ENCODE measurements at regions of chr17 and their contacts with region 1.

Region 1: DNA sequence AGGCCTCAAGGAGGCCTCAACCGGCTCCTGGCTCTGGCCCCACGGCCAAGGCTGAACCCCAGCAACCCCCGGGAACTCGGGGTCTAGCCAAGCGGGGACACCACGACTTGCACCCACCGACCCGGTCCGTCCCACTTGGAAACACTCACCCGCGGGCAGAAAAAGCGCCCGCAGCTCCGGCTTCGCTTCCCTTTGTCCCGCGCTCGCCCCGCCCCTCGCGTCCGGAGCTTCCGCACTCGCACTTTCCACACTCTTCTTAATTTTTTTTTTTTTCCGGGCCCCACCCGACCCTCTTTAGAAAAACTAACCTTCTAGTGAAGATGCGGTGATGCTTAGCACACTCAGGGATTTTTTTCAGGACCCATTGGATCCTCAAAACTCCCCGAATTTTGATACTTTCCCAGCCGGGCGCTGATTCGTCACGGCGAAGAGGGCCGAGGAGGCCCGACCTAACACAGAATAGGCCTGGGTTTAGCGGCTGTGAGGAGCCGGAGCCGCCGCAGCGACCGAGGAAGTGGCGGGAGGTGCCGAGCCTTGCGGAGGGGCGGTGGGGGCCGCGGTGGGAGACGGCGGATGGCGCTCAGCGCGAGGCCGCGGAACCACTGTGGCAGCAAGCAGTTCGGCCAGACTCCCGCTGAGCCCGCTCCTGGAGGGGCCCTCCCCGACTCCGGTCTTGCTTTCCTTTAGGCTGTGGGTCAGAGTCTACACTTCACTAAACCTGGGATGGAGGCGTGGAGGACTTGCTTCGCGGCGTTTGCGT is at the start of gene SMARCE1:
- DNase-seq: peak; percentile 51 to 88 (median 73)
- ATAC-seq: peak; percentile 66
- H3K4me3 ChIP-seq: peak within 1 kb of the TSS; percentile 85 to 96
- H3K4me3 Mint-ChIP-seq: peak within 1 kb of the TSS; percentile 95
- H3K27ac ChIP-seq: peak within 1 kb of the TSS; percentile 95 to 99
- H3K27ac Mint-ChIP-seq: peak within 1 kb of the TSS; percentile 99
- H3K4me1 ChIP-seq: peaks cover 36% of the 10 kb centered on the region
- H3K4me1 Mint-ChIP-seq: peaks cover 40% of the 10 kb centered on the region
- H3K27me3 ChIP-seq: no peaks in the 10 kb centered on the region
- H3K27me3 Mint-ChIP-seq: no peaks in the 10 kb centered on the region
- CTCF ChIP-seq: no peak
- total RNA-seq, gene SMARCE1: 64.8 to 74.9 TPM

Region 2: DNA sequence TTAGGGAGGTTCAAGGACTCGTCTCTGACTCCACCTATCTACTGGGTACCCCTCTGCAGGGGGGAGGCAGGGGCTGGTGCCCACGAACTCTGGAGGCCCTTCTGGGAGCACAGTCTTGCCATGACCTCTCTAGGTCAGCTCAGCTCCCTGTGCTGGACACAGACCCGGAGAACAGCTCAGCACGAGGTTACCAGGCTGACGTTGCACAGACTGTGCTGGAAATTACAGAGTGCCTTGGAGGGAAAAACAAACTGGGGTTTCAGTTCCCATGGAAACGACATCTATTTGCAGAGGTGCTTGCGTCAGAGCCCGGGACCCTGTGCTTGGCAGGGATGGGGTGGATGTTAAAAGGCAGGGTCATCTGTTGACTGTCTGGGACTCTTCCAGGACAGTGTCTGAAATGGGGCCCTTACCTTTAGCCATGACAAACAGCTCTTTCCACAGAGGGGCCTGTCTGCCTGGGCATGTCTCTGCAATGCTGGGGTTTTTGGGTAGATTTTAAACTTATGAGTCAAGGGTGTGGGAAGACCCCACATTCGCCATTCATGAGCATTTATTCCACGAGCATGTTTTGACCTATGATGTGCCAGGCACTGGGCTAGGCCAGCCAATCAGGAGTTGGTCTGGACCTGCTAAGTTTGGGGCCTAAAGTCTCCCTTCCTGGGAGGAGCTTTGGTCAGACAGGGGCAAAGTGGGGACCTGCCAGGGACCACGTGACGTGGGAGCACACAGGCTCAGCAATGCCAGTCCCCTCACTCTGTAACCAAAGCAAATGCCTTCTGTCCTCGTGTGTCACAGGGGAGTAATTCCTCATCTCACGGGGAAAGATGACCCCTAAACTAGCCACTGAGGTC is 105.0 kb before region 1 on chr17:
- CTCF ChIA-PET with region 1: no interaction called
- POLR2A ChIA-PET with region 1: interaction called, 10 read pairs
- intact Hi-C with region 1: no loop called
- DNase-seq: peak in 6 of 9 experiments; percentile 21 to 75 (median 58)
- ATAC-seq: peak; percentile 3
- H3K4me3 ChIP-seq: no peak overlapping the region
- H3K4me3 Mint-ChIP-seq: peak overlapping the region; percentile 72
- H3K27ac ChIP-seq: peak overlapping the region in 1 of 2 experiments; percentile 66
- H3K27ac Mint-ChIP-seq: peak overlapping the region; percentile 96
- H3K4me1 ChIP-seq: peaks cover 86% of the 10 kb centered on the region
- H3K4me1 Mint-ChIP-seq: peaks cover 88% of the 10 kb centered on the region
- H3K27me3 ChIP-seq: no peaks in the 10 kb centered on the region
- H3K27me3 Mint-ChIP-seq: no peaks in the 10 kb centered on the region
- CTCF ChIP-seq: no peak

Region 3: GRCh38 chr17:40582328-40582901 is 65.4 kb before region 1 on chr17:
- CTCF ChIA-PET with region 1: no interaction called
- POLR2A ChIA-PET with region 1: no interaction called
- intact Hi-C with region 1: no loop called
- DNase-seq: peak; percentile 48 to 90 (median 77)
- ATAC-seq: peak; percentile 85
- H3K4me3 ChIP-seq: peak overlapping the region; percentile 15 to 17
- H3K4me3 Mint-ChIP-seq: peak overlapping the region; percentile 79
- H3K27ac ChIP-seq: peak overlapping the region; percentile 60 to 74
- H3K27ac Mint-ChIP-seq: peak overlapping the region; percentile 94
- H3K4me1 ChIP-seq: peaks cover 86% of the 10 kb centered on the region
- H3K4me1 Mint-ChIP-seq: peaks cover 95% of the 10 kb centered on the region
- H3K27me3 ChIP-seq: no peaks in the 10 kb centered on the region
- H3K27me3 Mint-ChIP-seq: no peaks in the 10 kb centered on the region
- CTCF ChIP-seq: no peak

Region 4: DNA sequence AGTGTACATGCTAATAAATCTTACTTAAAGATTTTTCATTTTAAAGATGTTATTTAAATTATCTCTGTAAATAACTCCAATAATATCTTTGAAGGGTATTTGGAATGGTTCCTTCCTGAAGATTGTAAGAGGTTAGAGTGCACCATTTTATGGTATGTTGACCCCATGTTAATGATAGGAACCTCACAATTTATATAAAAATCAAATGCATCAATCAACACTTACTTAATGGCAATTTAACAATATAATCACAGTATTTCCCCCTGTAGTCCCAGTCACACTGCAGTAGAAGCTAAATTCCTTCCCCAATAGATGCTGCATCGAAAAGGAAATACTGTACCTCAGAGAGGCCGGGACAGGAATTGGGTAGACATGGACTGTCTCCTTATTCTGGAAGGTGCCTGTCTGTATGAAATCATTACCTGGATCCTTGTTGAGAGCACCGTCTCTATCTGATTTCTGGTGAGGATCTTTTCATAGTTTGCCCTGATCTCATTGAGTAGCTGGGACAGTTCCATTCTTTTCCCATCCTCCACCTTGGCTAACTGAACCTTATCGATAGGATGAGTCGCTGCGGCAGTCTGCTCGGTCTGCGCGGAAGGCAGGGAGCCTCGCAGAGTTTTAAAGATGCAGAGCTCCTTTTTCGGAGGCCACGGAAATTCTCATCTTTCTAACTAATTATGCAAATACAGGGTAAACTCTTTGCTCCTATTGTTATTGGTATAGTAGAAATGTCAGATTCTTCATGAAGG is 17.0 kb after region 1 on chr17 and contains the start of gene KRT222:
- CTCF ChIA-PET with region 1: no interaction called
- POLR2A ChIA-PET with region 1: interaction called, 10 read pairs
- intact Hi-C with region 1: no loop called
- DNase-seq: no peak
- ATAC-seq: no peak
- H3K4me3 ChIP-seq: no peak within 1 kb of the TSS
- H3K4me3 Mint-ChIP-seq: peak within 1 kb of the TSS; percentile 26
- H3K27ac ChIP-seq: no peak within 1 kb of the TSS
- H3K27ac Mint-ChIP-seq: no peak within 1 kb of the TSS
- H3K4me1 ChIP-seq: peaks cover 5% of the 10 kb centered on the region
- H3K4me1 Mint-ChIP-seq: peaks cover 11% of the 10 kb centered on the region
- H3K27me3 ChIP-seq: no peaks in the 10 kb centered on the region
- H3K27me3 Mint-ChIP-seq: peaks cover 27% of the 10 kb centered on the region
- CTCF ChIP-seq: no peak
- total RNA-seq, gene KRT222: not detected

Region 5: GRCh38 chr17:40678902-40679522 is 31.2 kb after region 1 on chr17:
- CTCF ChIA-PET with region 1: no interaction called
- POLR2A ChIA-PET with region 1: no interaction called
- intact Hi-C with region 1: no loop called
- DNase-seq: peak in 1 of 9 experiments; percentile 10
- ATAC-seq: peak; percentile 38
- H3K4me3 ChIP-seq: no peak overlapping the region
- H3K4me3 Mint-ChIP-seq: no peak overlapping the region
- H3K27ac ChIP-seq: no peak overlapping the region
- H3K27ac Mint-ChIP-seq: no peak overlapping the region
- H3K4me1 ChIP-seq: no peaks in the 10 kb centered on the region
- H3K4me1 Mint-ChIP-seq: no peaks in the 10 kb centered on the region
- H3K27me3 ChIP-seq: peaks cover 0 to 4% of the 10 kb centered on the region in 2 experiments
- H3K27me3 Mint-ChIP-seq: peaks cover 47% of the 10 kb centered on the region
- CTCF ChIP-seq: no peak

Region 6: GRCh38 chr17:40707720-40708119 is 59.9 kb after region 1 on chr17:
- CTCF ChIA-PET with region 1: no interaction called
- POLR2A ChIA-PET with region 1: no interaction called
- intact Hi-C with region 1: no loop called
- DNase-seq: no peak
- ATAC-seq: no peak
- H3K4me3 ChIP-seq: no peak overlapping the region
- H3K4me3 Mint-ChIP-seq: no peak overlapping the region
- H3K27ac ChIP-seq: no peak overlapping the region
- H3K27ac Mint-ChIP-seq: no peak overlapping the region
- H3K4me1 ChIP-seq: no peaks in the 10 kb centered on the region
- H3K4me1 Mint-ChIP-seq: no peaks in the 10 kb centered on the region
- H3K27me3 ChIP-seq: no peaks in the 10 kb centered on the region
- H3K27me3 Mint-ChIP-seq: peaks cover 27% of the 10 kb centered on the region
- CTCF ChIP-seq: no peak

Region 7: DNA sequence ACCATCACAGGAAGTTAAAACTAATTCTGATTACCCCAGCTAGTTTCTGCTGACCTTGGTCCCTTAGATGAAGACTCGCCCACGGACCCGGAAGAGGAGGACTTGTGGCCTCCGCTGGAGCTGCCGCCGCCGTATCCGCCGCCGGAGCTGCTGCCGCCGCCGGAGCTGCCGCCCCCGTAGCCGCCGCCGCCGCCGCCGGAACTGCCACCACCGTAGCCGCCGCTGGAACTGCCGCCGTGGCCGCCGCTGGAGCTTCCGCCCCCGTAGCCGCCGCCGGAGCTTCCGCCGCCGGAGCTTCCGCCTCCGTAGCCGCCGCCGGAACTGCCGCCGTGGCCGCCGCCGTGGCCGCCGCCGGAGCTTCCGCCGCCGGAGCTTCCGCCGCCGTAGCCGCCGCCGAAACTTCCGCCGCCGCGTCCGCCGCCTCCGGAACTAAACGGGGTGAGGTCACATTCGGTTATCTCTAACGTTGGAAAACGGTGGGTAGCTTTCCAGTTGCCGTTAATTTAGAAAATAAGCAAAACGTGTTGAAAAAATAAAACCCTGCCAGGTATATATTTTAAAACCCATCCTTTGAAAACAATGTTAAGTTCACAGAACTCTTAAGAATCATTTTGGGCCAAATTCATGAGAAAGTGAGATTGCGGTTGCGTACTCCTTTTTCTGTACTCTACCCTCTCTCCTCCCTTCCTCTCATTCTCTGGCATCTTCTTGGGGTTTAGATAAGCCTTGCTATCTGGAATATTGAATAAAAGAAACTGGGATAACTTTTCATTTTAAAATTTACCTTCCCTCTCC is 171.1 kb after region 1 on chr17:
- CTCF ChIA-PET with region 1: no interaction called
- POLR2A ChIA-PET with region 1: interaction called, 3 read pairs
- intact Hi-C with region 1: loop called (anchors 2 kb)
- DNase-seq: peak; percentile 70 to 94 (median 85)
- ATAC-seq: peak; percentile 76
- H3K4me3 ChIP-seq: peak overlapping the region; percentile 69 to 77
- H3K4me3 Mint-ChIP-seq: peak overlapping the region; percentile 91
- H3K27ac ChIP-seq: peak overlapping the region; percentile 70 to 79
- H3K27ac Mint-ChIP-seq: peak overlapping the region; percentile 95
- H3K4me1 ChIP-seq: peaks cover 17% of the 10 kb centered on the region
- H3K4me1 Mint-ChIP-seq: peaks cover 26% of the 10 kb centered on the region
- H3K27me3 ChIP-seq: peaks cover 0 to 3% of the 10 kb centered on the region in 2 experiments
- H3K27me3 Mint-ChIP-seq: peaks cover 10% of the 10 kb centered on the region
- CTCF ChIP-seq: no peak

Measured in CD8-positive, alpha-beta T cell (primary cell).